Activated T-helper 1 cell treated with anti-CD3 and anti-CD28 coated beads, Interleukin-12 subunit alpha, Interleukin-12 subunit beta, Interleukin-2, Interleukin-4 antibody, amounts not matched to agents 30 ng/mL and 10 ng/mL and 1 ng/mL, durations not matched to agents 14 hours and 24 hours and 36 hours (primary cell): ENCODE measurements at regions of chr13 and their contacts with region 1.

Region 1: GRCh38 chr13:42392716-42393572 is 121.0 kb downstream of the AKAP11 start:
- DNase-seq: peak; percentile 45
- H3K4me3 Mint-ChIP-seq: peak overlapping the region; percentile 89
- H3K27ac Mint-ChIP-seq: peak overlapping the region; percentile 100
- H3K4me1 Mint-ChIP-seq: peaks cover 79% of the 10 kb centered on the region
- H3K27me3 Mint-ChIP-seq: no peaks in the 10 kb centered on the region

Region 2: DNA sequence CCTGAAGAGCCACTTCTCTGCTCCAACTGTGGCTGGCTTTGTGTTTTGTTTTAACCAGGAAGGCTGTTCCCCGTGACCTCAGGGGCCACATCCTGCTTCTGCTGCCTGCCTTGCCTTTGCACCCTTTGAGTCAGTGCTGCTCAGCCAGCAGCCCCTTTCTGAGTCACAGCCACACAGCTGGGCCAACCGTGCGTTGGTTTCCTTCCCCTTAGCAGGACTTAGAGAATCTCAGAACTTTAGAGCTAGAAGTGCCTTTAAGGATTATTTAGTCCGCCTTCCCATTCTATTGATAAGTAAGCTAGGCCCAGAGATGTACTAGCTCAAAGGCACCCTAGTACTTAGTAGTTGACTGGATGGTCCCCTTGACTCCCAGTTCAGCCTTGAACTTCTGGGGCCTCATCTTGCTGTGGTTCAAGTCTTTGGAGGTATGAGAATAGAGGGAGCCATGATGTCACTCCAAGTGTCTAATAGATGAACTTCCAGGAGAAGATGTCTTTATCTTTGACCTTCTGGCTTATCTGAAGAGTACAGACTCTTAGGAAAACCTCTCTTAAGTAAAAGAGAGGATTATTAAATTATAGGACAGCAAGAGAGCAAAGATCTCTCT is 927.6 kb before region 1 on chr13:
- intact Hi-C with region 1: loop called (anchors 10 kb)
- DNase-seq: peak; percentile 89
- H3K4me3 Mint-ChIP-seq: peak overlapping the region; percentile 80
- H3K27ac Mint-ChIP-seq: peak overlapping the region; percentile 96
- H3K4me1 Mint-ChIP-seq: peaks cover 90% of the 10 kb centered on the region
- H3K27me3 Mint-ChIP-seq: no peaks in the 10 kb centered on the region

Region 3: DNA sequence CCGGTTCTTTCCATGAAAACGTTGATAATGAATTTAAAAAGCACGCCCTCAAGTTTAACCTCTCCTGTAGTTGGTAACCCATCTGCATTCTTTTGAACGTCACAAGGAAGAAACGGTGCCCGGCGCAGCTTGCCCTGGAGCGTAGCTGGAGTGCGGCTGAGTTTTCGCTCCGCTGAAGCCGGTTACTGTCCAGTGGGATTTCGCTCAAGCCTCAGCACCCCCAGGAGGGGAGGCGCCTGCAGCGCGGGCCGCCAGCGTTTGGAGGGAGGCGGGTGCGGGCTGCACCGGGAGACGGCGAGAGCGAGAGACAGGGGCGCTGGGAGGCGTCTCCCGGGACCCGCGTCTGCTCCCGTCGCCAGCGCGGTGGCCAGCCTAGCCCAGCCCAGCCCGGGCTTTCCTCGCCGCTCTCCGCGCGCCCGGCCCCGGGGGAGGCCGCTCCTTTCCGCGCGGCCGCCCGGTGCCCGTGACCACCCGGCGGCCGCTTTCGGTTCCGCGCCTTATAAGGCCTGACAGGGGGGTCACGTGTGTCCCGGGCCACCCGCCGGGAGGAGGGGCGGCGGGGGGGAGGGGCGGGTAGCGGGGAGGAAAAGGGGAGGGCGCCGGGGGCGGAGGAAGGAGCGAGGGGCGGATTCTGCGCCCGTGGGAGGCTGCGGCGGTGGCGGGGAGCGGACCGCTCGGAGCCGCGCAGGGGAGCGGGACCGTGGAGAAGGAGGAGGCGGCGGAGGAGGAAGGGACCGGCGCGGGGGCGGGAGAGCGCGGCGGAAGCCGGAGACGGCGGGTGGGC is 352.8 kb before region 1 on chr13:
- intact Hi-C with region 1: loop called (anchors 10 kb)
- DNase-seq: peak; percentile 80
- H3K4me3 Mint-ChIP-seq: peak overlapping the region; percentile 87
- H3K27ac Mint-ChIP-seq: peak overlapping the region; percentile 56
- H3K4me1 Mint-ChIP-seq: peaks cover 17% of the 10 kb centered on the region
- H3K27me3 Mint-ChIP-seq: peaks cover 44% of the 10 kb centered on the region

Region 4: GRCh38 chr13:42328672-42329071 is 64.3 kb before region 1 on chr13:
- intact Hi-C with region 1: no loop called
- DNase-seq: no peak
- H3K4me3 Mint-ChIP-seq: peak overlapping the region; percentile 28
- H3K27ac Mint-ChIP-seq: peak overlapping the region; percentile 61
- H3K4me1 Mint-ChIP-seq: peaks cover 23% of the 10 kb centered on the region
- H3K27me3 Mint-ChIP-seq: no peaks in the 10 kb centered on the region

Region 5: GRCh38 chr13:42354241-42355091 is 38.5 kb before region 1 on chr13:
- intact Hi-C with region 1: loop called (anchors 1 kb)
- DNase-seq: no peak
- H3K4me3 Mint-ChIP-seq: peak overlapping the region; percentile 72
- H3K27ac Mint-ChIP-seq: peak overlapping the region; percentile 99
- H3K4me1 Mint-ChIP-seq: peaks cover 68% of the 10 kb centered on the region
- H3K27me3 Mint-ChIP-seq: peaks cover 1% of the 10 kb centered on the region

Region 6: GRCh38 chr13:42405665-42406390 is 12.9 kb after region 1 on chr13:
- intact Hi-C with region 1: loop called (anchors 1 kb)
- DNase-seq: no peak
- H3K4me3 Mint-ChIP-seq: peak overlapping the region; percentile 60
- H3K27ac Mint-ChIP-seq: peak overlapping the region; percentile 96
- H3K4me1 Mint-ChIP-seq: peaks cover 60% of the 10 kb centered on the region
- H3K27me3 Mint-ChIP-seq: no peaks in the 10 kb centered on the region

Region 7: GRCh38 chr13:42574435-42575311 is 181.7 kb after region 1 on chr13:
- intact Hi-C with region 1: loop called (anchors 2 kb)
- DNase-seq: no peak
- H3K4me3 Mint-ChIP-seq: peak overlapping the region; percentile 74
- H3K27ac Mint-ChIP-seq: peak overlapping the region; percentile 64
- H3K4me1 Mint-ChIP-seq: peaks cover 19% of the 10 kb centered on the region
- H3K27me3 Mint-ChIP-seq: peaks cover 59% of the 10 kb centered on the region